Right cardiac atrium (tissue), 5 donors: ENCODE measurements at regions of chr12 and their contacts with region 1.

Region 1: DNA sequence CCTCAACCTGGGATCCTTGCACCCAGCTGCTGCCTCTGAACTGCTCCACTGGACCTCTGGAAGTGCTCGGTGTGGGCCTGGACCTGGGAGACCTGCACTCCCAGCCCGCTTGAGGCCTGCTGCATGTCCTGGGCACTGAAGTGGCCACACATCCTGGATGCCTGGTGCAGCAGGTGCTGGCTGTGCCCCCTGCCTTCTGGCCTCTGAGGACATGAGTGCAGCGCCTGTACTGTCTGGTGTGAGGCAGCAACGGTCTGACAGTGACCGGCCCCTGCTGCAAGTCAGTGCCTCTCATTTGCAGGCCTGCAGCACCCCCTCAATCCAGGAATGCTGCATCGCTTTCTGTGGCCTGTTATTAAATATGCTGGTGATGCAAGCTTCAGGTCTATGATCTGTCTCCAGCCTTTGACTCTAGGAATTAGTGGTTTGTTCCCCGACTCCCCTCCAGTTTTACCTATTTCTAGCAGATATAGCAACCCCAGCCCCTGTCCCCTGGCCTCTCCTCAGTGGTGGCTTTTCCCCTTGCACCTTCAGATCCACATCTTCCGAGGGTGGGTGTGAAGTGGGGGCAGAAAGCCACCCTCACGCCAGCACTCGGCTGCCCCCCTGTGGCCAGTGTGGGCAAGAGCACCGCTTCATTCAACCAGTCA is 3.6 kb downstream of the SMIM41 start:
- DNase-seq: peak; percentile 63 to 86 (median 75)
- ATAC-seq: peak; percentile 34 to 42
- H3K4me3 ChIP-seq: no peak overlapping the region
- H3K27ac ChIP-seq: peak overlapping the region; percentile 60
- H3K4me1 ChIP-seq: peaks cover 8% of the 10 kb centered on the region
- H3K27me3 ChIP-seq: no peaks in the 10 kb centered on the region

Region 2: GRCh38 chr12:52004042-52004648 is 79.0 kb before region 1 on chr12:
- intact Hi-C with region 1: loop called in 1 of 4 experiments (anchors 5 kb)
- DNase-seq: peak in 1 of 3 donors; percentile 82
- ATAC-seq: peak in 1 of 2 donors; percentile 2
- H3K4me3 ChIP-seq: no peak overlapping the region
- H3K27ac ChIP-seq: no peak overlapping the region
- H3K4me1 ChIP-seq: no peaks in the 10 kb centered on the region
- H3K27me3 ChIP-seq: no peaks in the 10 kb centered on the region

Region 3: GRCh38 chr12:52023182-52023975 is 59.7 kb before region 1 on chr12:
- intact Hi-C with region 1: loop called in 3 of 4 experiments (anchors 1 to 5 kb)
- DNase-seq: peak; percentile 91 to 96 (median 96)
- ATAC-seq: peak; percentile 74 to 78
- H3K4me3 ChIP-seq: peak overlapping the region; percentile 25
- H3K27ac ChIP-seq: peak overlapping the region; percentile 76
- H3K4me1 ChIP-seq: peaks cover 3% of the 10 kb centered on the region
- H3K27me3 ChIP-seq: no peaks in the 10 kb centered on the region

Region 4: GRCh38 chr12:52029686-52030085 is 53.4 kb before region 1 on chr12:
- intact Hi-C with region 1: loop called in 3 of 4 experiments (anchors 1 to 5 kb)
- DNase-seq: peak in 1 of 3 donors; percentile 67
- ATAC-seq: no peak
- H3K4me3 ChIP-seq: no peak overlapping the region
- H3K27ac ChIP-seq: peak overlapping the region; percentile 16
- H3K4me1 ChIP-seq: peaks cover 2% of the 10 kb centered on the region
- H3K27me3 ChIP-seq: no peaks in the 10 kb centered on the region

Region 5: DNA sequence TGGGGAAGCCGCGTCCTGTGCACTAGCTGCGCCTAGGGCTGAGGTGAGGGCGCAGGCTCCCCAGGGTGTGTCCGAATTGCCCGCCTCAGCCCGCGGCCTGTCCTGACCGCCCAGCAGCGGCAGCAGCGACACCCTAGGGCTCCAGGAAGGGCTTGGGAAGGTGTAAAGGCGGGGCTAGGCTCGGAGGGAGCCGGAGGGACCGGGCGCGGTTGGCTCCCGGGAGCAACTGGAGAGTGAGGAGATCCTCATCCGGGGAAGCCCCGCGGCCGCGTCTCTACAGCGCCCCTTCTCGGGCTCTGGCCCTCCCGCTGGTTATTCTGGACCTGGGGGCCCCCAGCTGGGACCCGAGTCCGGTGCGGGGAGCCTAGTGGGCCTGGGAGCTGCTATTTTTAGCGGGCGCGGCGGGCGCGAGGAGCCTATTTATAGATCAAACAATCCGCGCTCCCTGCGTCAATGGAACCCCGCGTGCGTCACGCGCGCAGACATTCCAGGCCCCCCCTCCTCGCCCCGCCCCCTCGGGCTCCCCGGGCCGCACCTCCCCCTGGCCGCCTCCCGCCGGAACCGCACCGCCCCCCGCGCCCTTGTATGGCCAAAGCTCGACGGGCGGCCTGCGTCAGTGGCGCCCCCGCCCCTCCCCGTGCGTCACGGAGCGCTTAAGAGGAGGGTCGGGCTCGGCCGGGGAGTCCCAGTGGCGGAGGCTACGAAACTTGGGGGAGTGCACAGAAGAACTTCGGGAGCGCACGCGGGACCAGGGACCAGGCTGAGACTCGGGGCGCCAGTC is 32.2 kb before region 1 on chr12 and contains the start of gene NR4A1:
- intact Hi-C with region 1: no loop called
- DNase-seq: peak; percentile 99 to 100 (median 100)
- ATAC-seq: peak; percentile 87 to 94
- H3K4me3 ChIP-seq: peak within 1 kb of the TSS; percentile 72
- H3K27ac ChIP-seq: peak within 1 kb of the TSS; percentile 97
- H3K4me1 ChIP-seq: peaks cover 26% of the 10 kb centered on the region
- H3K27me3 ChIP-seq: no peaks in the 10 kb centered on the region
- total RNA-seq, gene NR4A1: 50.2 to 238 (median 85.2) TPM